ENCODE measurements at regions of chr3 and their contacts with region 1.

Region 1: GRCh38 chr3:184017672-184018423 is at the start of gene ABCC5:
- DNase-seq: peak; percentile 85 to 95 (median 89)
- ATAC-seq: peak; percentile 95
- H3K4me3 ChIP-seq: peak within 1 kb of the TSS; percentile 89
- H3K27ac ChIP-seq: peak within 1 kb of the TSS; percentile 90
- H3K4me1 ChIP-seq: peaks cover 20 to 25% of the 10 kb centered on the region in 2 experiments; a peak in 4 of 5 replicates
- H3K27me3 ChIP-seq: no peaks in the 10 kb centered on the region
- CTCF ChIP-seq: 0 out of 6 replicates have a peak, but pooled peaks of 1 of the 3 experiments have one; percentile 21
- EP300 ChIP-seq: peak; percentile 91
- POLR2A ChIP-seq: peak; percentile 85
- RAD21 ChIP-seq: no peak
- polyA plus RNA-seq, gene ABCC5: 41.9 to 53.0 TPM

Region 2: GRCh38 chr3:183904833-183905780 is 112.7 kb before region 1 on chr3:
- CTCF ChIA-PET with region 1: interaction called, 4 read pairs
- POLR2A ChIA-PET with region 1: interaction called, 3 read pairs
- in situ Hi-C with region 1: no loop called
- intact Hi-C with region 1: loop called (anchors 1 kb)
- DNase-seq: no peak
- ATAC-seq: no peak; the same call in 2 of the 3 replicates
- H3K4me3 ChIP-seq: no peak overlapping the region
- H3K27ac ChIP-seq: no peak overlapping the region
- H3K4me1 ChIP-seq: peaks cover 0 to 17% of the 10 kb centered on the region in 2 experiments; a peak in 1 of 5 replicates
- H3K27me3 ChIP-seq: peaks cover 3 to 24% of the 10 kb centered on the region in 2 experiments; a peak in 4 of 5 replicates
- CTCF ChIP-seq: no peak
- EP300 ChIP-seq: no peak
- POLR2A ChIP-seq: no peak
- RAD21 ChIP-seq: no peak

Region 3: DNA sequence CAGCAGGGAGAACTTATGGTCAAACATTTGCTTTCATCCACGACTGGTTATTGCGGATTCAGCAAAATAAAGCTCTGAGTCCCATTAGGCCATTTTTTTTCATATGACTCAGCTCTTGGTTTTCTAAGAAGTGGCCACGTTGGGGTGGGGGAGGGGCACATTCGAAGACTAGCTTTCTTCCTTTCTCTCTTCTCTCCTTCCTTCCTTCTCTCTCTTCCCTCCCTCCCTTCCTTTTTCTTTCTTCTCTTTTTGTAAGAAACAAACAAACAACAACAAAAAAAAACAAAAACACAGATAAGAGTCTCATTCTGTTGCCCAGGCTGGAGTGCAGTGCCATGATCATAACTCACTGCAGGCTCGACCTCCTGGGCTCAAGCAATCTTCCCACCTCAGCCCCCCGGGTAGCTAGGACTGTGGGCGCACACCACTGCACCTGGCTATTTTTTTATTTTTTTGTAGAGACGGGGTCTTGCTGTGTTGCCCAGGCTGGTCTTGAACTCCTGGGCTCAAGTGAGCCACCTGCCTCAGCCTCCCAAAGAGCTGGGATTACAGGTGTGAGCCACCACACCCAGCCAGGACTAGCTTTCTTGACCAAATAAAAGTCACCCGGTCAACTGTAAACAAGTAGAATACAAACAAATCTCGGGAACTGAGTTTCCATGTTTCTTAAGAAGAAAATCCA is 41.7 kb before region 1 on chr3:
- CTCF ChIA-PET with region 1: no interaction called
- POLR2A ChIA-PET with region 1: interaction called, 3 read pairs
- in situ Hi-C with region 1: no loop called
- intact Hi-C with region 1: loop called (anchors 2 kb)
- DNase-seq: peak in 3 of 4 experiments; percentile 35 to 85 (median 71)
- ATAC-seq: peak; percentile 72
- H3K4me3 ChIP-seq: no peak overlapping the region
- H3K27ac ChIP-seq: peak overlapping the region; percentile 75
- H3K4me1 ChIP-seq: peaks cover 6 to 23% of the 10 kb centered on the region in 2 experiments; a peak in 4 of 5 replicates
- H3K27me3 ChIP-seq: no peaks in the 10 kb centered on the region
- CTCF ChIP-seq: no peak
- EP300 ChIP-seq: peak; percentile 84
- POLR2A ChIP-seq: no peak; the same call in 1 of the 2 replicates
- RAD21 ChIP-seq: no peak

Region 4: GRCh38 chr3:184005941-184006507 is 11.8 kb before region 1 on chr3:
- CTCF ChIA-PET with region 1: no interaction called
- POLR2A ChIA-PET with region 1: interaction called, 15 read pairs
- in situ Hi-C with region 1: no loop called
- intact Hi-C with region 1: no loop called
- DNase-seq: peak; percentile 35 to 76 (median 54)
- ATAC-seq: peak; percentile 89
- H3K4me3 ChIP-seq: no peak overlapping the region
- H3K27ac ChIP-seq: peak overlapping the region; percentile 60; the same call in 2 of the 3 replicates
- H3K4me1 ChIP-seq: peaks cover 6 to 12% of the 10 kb centered on the region in 2 experiments; a peak in 3 of 5 replicates
- H3K27me3 ChIP-seq: no peaks in the 10 kb centered on the region
- CTCF ChIP-seq: no peak
- EP300 ChIP-seq: peak; percentile 64
- POLR2A ChIP-seq: no peak
- RAD21 ChIP-seq: no peak

Region 5: DNA sequence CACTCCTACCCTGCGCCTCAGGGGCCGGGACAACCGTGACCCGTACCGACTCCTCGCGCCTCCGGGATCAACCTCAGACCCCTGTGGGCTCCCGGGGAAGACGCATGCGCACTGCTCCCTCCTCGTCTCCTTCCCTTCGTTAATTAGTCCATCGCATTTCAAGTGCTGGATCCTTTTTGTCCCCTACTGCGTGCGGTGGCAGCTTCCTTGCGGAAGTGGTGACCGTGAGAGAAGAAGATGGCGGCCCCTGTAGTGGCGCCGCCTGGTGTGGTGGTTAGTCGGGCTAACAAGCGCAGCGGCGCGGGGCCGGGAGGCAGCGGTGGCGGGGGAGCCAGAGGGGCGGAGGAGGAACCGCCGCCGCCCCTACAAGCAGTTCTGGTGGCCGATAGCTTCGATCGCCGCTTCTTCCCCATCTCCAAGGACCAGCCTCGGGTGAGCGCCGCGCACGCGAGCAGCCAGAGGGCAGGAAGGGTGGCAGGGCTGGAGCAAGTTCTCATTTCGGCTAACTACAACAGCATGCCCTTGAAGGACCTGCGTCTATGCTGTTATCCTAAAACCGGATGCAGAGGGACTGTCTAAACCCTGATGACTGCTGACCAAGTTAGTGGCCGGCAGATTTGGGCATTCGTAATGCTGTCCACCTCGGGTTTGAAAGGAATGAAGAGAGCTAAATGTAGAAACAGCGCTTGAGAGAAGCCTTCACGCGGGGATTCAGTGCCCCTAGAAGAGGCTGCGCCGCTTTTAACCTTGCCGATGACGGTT is 117.5 kb after region 1 on chr3 and contains the start of gene EIF2B5:
- CTCF ChIA-PET with region 1: no interaction called
- POLR2A ChIA-PET with region 1: interaction called, 11 read pairs
- in situ Hi-C with region 1: no loop called
- intact Hi-C with region 1: no loop called
- DNase-seq: peak; percentile 90 to 96 (median 92)
- ATAC-seq: peak; percentile 90
- H3K4me3 ChIP-seq: peak within 1 kb of the TSS; percentile 97
- H3K27ac ChIP-seq: peak within 1 kb of the TSS; percentile 92
- H3K4me1 ChIP-seq: peaks cover 7 to 13% of the 10 kb centered on the region in 2 experiments; a peak in 4 of 5 replicates
- H3K27me3 ChIP-seq: no peaks in the 10 kb centered on the region; a peak in 1 of 5 replicates
- CTCF ChIP-seq: peak; percentile 29 to 49 (median 31); a peak in 5 of 6 replicates
- EP300 ChIP-seq: peak; percentile 51
- POLR2A ChIP-seq: peak; percentile 92
- RAD21 ChIP-seq: peak; percentile 20 to 28; a peak in 3 of 4 replicates
- polyA plus RNA-seq, gene EIF2B5: 19.1 to 31.8 TPM